ENCODE measurements at regions of chr6 and their contacts with region 1.

Region 1: GRCh38 chr6:63272397-63272796 is 47.4 kb downstream of the LGSN start:
- DNase-seq: no peak
- ATAC-seq: peak; percentile 31; the same call in 1 of the 3 replicates
- H3K4me3 ChIP-seq: no peak overlapping the region
- H3K27ac ChIP-seq: no peak overlapping the region
- H3K4me1 ChIP-seq: no peaks in the 10 kb centered on the region; the same call in 1 of the 2 replicates
- H3K27me3 ChIP-seq: no peaks in the 10 kb centered on the region
- CTCF ChIP-seq: peak; percentile 10 to 56 (median 21); a peak in 4 of 6 replicates
- EP300 ChIP-seq: no peak
- POLR2A ChIP-seq: no peak
- RAD21 ChIP-seq: peak; percentile 67

Region 2: DNA sequence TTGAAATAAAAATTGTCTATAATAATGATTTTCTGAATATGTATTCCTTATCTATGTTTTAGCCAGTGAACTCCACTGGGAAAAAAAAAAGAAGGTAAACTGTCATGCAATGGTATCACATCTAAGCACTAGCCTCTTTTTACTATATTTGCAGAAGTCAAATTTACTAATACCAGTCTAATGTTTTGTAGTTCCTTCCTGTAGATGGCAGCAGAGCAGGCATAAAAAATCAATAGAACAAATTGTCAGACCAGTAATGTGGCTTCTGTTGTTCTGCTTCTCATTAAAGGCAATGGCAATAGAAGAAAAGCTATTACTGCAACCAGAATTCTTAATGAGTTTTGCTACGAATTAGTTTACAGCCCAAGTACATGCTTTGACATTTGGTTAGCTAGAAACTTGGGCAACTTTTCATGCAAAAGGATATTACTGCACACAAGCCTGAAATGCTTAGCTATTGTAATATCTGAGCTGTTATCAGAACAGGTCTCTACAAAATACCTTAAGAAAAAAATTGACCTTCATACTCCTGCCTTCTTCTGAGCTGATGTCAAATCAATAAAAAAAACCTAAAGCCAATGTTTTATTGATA is 1463.3 kb before region 1 on chr6:
- CTCF ChIA-PET with region 1: interaction called, 7 read pairs
- POLR2A ChIA-PET with region 1: no interaction called
- RAD21 ChIA-PET with region 1: interaction called, 7 read pairs
- SMC1A ChIA-PET with region 1: no interaction called
- in situ Hi-C with region 1: loop called (anchors 25 kb)
- intact Hi-C with region 1: loop called (anchors 5 kb)
- DNase-seq: no peak
- ATAC-seq: peak; percentile 73
- H3K4me3 ChIP-seq: no peak overlapping the region
- H3K27ac ChIP-seq: no peak overlapping the region
- H3K4me1 ChIP-seq: no peaks in the 10 kb centered on the region
- H3K27me3 ChIP-seq: no peaks in the 10 kb centered on the region
- CTCF ChIP-seq: peak; percentile 43 to 49 (median 49); a peak in 5 of 6 replicates
- EP300 ChIP-seq: no peak
- POLR2A ChIP-seq: no peak
- RAD21 ChIP-seq: peak; percentile 60

Region 3: DNA sequence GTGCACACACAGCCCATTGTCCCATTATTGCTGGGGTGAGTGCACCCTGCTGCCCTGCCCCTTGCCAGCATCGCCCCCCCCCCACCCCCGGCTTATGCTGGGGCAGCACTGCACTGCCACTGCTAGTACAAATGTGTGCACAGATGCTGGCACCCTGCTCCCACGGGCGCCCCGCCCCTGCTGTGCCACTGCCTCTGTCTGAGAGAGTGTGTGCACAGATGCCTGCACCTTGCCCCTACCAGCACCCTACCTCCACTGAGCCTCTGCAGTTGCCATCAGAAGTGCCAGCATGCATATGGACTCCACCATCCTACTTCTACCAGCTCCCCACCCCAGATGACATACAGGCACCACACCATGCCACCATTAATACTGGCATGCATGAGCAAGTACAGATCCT is 531.8 kb before region 1 on chr6:
- CTCF ChIA-PET with region 1: interaction called, 3 read pairs
- POLR2A ChIA-PET with region 1: no interaction called
- RAD21 ChIA-PET with region 1: no interaction called
- SMC1A ChIA-PET with region 1: interaction called, 9 read pairs
- in situ Hi-C with region 1: no loop called
- intact Hi-C with region 1: loop called (anchors 5 kb)
- DNase-seq: no peak
- ATAC-seq: no peak
- H3K4me3 ChIP-seq: no peak overlapping the region
- H3K27ac ChIP-seq: no peak overlapping the region
- H3K4me1 ChIP-seq: no peaks in the 10 kb centered on the region
- H3K27me3 ChIP-seq: no peaks in the 10 kb centered on the region
- CTCF ChIP-seq: no peak
- EP300 ChIP-seq: no peak
- POLR2A ChIP-seq: no peak
- RAD21 ChIP-seq: no peak

Region 4: DNA sequence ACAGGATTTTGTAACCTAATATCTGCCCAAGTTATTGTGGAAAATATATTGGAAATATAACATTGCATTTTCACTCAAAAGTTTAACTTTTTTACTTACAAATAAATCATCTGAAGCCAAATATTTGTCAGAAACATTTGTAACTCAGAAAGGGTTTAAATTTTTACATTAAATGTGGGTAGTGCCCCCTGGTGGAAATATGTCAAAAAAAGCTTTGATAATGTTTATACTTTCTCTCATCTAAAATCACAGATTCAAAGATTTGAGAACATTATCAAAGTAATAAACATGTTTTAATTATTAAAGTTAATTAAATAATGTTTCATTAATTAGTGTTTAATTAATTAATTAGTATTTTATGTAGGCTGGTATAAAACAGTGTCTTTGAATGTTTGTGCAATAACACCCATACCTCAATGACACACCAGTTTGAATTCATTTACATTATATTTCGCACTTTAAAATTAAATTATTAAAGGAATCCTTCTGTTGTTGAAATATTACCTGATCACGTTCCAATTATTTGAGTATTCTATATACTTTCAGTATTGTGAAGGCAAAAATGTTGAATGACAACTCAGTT is 381.2 kb before region 1 on chr6:
- CTCF ChIA-PET with region 1: interaction called, 9 read pairs
- POLR2A ChIA-PET with region 1: no interaction called
- RAD21 ChIA-PET with region 1: no interaction called
- SMC1A ChIA-PET with region 1: interaction called, 5 read pairs
- in situ Hi-C with region 1: no loop called
- intact Hi-C with region 1: loop called (anchors 5 kb)
- DNase-seq: no peak
- ATAC-seq: no peak
- H3K4me3 ChIP-seq: no peak overlapping the region
- H3K27ac ChIP-seq: no peak overlapping the region
- H3K4me1 ChIP-seq: no peaks in the 10 kb centered on the region
- H3K27me3 ChIP-seq: no peaks in the 10 kb centered on the region
- CTCF ChIP-seq: peak; percentile 22 to 36 (median 27); a peak in 3 of 6 replicates
- EP300 ChIP-seq: no peak
- POLR2A ChIP-seq: no peak
- RAD21 ChIP-seq: no peak

Region 5: GRCh38 chr6:63121166-63121565 is 151.2 kb before region 1 on chr6:
- CTCF ChIA-PET with region 1: interaction called, 7 read pairs
- POLR2A ChIA-PET with region 1: no interaction called
- RAD21 ChIA-PET with region 1: interaction called, 5 read pairs
- SMC1A ChIA-PET with region 1: interaction called, 7 read pairs
- in situ Hi-C with region 1: no loop called
- intact Hi-C with region 1: loop called (anchors 1 kb)
- DNase-seq: no peak
- ATAC-seq: peak; percentile 72
- H3K4me3 ChIP-seq: no peak overlapping the region
- H3K27ac ChIP-seq: no peak overlapping the region
- H3K4me1 ChIP-seq: no peaks in the 10 kb centered on the region
- H3K27me3 ChIP-seq: no peaks in the 10 kb centered on the region
- CTCF ChIP-seq: peak in 2 of 3 experiments; percentile 17 to 26; a peak in 1 of 6 replicates
- EP300 ChIP-seq: no peak
- POLR2A ChIP-seq: no peak
- RAD21 ChIP-seq: no peak

Region 6: DNA sequence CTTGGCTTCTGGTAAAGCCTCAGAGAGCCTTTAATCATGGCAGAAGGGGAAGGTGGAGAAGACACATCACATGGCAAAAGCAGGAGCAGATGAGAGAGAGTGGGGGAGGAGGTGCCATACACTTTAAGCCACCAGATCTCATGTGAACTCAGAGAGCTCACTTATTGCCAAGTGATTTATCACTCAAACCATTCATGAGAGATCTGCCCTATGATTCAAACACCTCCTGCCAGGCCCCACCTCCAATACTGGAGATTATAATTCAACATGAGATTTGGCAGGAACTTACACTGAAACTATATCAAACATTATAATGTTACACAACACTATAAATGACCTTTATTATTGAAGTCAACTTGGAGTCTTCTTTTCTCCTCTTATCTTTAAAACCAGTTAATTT is 13.2 kb before region 1 on chr6:
- CTCF ChIA-PET with region 1: interaction called, 5 read pairs
- POLR2A ChIA-PET with region 1: no interaction called
- RAD21 ChIA-PET with region 1: interaction called, 3 read pairs
- SMC1A ChIA-PET with region 1: interaction called, 13 read pairs
- in situ Hi-C with region 1: no loop called
- intact Hi-C with region 1: no loop called
- DNase-seq: no peak
- ATAC-seq: no peak
- H3K4me3 ChIP-seq: no peak overlapping the region
- H3K27ac ChIP-seq: no peak overlapping the region
- H3K4me1 ChIP-seq: no peaks in the 10 kb centered on the region
- H3K27me3 ChIP-seq: no peaks in the 10 kb centered on the region
- CTCF ChIP-seq: no peak
- EP300 ChIP-seq: no peak
- POLR2A ChIP-seq: no peak
- RAD21 ChIP-seq: no peak

Region 7: DNA sequence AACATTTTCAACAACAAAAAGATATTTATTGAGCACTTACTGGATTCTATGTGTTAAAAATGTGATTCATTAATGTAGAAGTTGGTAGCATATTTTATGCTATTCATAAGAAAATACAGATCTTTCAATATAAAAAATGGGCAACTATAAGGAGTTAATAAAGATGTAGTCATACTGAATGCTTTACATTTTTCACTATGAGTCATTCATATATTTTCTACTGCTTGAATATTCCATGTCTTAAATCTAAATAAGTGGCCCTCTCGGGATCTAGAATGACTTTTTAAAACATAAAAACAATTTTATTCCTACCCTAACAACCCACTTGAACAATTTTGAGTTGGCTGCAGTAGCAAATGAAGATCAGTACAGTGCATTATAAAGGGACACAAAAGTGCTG is 725.3 kb after region 1 on chr6:
- CTCF ChIA-PET with region 1: no interaction called
- POLR2A ChIA-PET with region 1: no interaction called
- RAD21 ChIA-PET with region 1: no interaction called
- SMC1A ChIA-PET with region 1: no interaction called
- in situ Hi-C with region 1: no loop called
- intact Hi-C with region 1: no loop called
- DNase-seq: no peak
- ATAC-seq: no peak
- H3K4me3 ChIP-seq: no peak overlapping the region
- H3K27ac ChIP-seq: no peak overlapping the region
- H3K4me1 ChIP-seq: no peaks in the 10 kb centered on the region
- H3K27me3 ChIP-seq: no peaks in the 10 kb centered on the region
- CTCF ChIP-seq: no peak
- EP300 ChIP-seq: no peak
- POLR2A ChIP-seq: no peak
- RAD21 ChIP-seq: no peak

Measured in GM12878 (cell line).